Activated CD4-positive, alpha-beta T cell treated with anti-CD3 and anti-CD28 coated beads for 36 hours (primary cell): ENCODE measurements at regions of chr1 and their contacts with region 1.

Region 1: DNA sequence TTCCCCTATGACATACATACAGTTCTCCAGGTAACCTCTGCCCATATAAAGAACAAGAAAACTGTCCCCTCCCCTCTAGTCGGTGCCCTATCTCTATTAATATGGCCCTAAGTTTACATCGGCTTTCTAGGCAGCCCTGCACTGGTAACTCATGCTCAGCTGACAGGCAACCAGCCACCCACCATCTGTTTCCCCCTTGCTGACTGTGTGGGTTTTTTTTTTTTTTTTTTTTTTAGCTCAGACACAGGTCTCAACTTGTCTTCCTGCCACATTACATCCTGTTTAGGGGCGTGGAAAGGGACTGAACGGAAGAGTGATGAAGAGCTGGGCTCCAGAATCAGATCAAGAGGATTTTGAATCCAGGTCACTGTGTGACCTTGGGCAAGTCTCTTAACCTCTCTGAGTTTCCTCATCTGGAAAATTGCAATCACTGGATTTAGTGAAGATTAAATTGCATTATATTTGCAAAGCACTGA is 14.0 kb downstream of the LAPTM5 start:
- DNase-seq: peak; percentile 81
- ATAC-seq: peak; percentile 78
- H3K4me3 Mint-ChIP-seq: peak overlapping the region; percentile 59
- H3K27ac Mint-ChIP-seq: peak overlapping the region; percentile 99
- H3K4me1 Mint-ChIP-seq: peaks cover 91% of the 10 kb centered on the region
- H3K27me3 Mint-ChIP-seq: no peaks in the 10 kb centered on the region

Region 2: GRCh38 chr1:30684881-30685795 is 58.5 kb before region 1 on chr1:
- CTCF ChIA-PET with region 1: no interaction called
- POLR2A ChIA-PET with region 1: no interaction called
- intact Hi-C with region 1: no loop called
- DNase-seq: peak; percentile 35
- ATAC-seq: peak; percentile 47
- H3K4me3 Mint-ChIP-seq: peak overlapping the region; percentile 42
- H3K27ac Mint-ChIP-seq: no peak overlapping the region
- H3K4me1 Mint-ChIP-seq: peaks cover 3% of the 10 kb centered on the region
- H3K27me3 Mint-ChIP-seq: peaks cover 33% of the 10 kb centered on the region

Region 3: DNA sequence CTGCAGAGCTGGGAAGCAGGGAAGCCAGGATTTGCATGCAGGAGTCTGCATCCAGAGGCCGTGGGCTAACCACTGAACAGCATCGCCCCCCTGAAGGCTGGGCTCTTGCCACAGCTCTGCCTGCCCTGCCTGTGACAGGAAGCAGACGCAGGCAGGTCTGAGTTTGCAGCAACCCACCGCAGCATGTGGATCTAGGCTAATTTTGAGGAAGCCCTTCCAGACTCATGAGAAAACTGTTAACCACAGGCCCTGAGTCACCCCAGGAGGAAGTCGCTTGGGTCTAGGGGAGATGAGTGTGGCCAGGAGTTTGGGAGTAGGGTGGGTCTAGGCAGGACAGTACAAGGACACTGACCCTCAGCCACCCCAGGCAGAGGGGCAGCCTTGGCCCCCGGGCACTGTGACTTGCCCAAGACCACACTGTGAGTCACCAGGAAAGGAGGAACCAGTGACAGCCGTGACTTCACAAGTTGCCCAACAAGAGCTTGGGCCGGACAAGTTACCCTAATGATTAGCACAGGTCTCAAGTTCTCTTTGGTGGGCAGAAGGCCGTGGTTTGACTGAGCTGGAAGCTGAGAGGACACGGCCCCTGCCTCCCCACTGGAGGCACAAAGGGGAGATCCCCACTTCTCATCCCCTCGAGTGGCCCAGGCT is 13.0 kb after region 1 on chr1:
- CTCF ChIA-PET with region 1: interaction called, 27 read pairs
- POLR2A ChIA-PET with region 1: interaction called, 15 read pairs
- intact Hi-C with region 1: loop called (anchors 1 to 2 kb)
- DNase-seq: peak; percentile 84
- ATAC-seq: peak; percentile 54
- H3K4me3 Mint-ChIP-seq: peak overlapping the region; percentile 92
- H3K27ac Mint-ChIP-seq: peak overlapping the region; percentile 99
- H3K4me1 Mint-ChIP-seq: peaks cover 81% of the 10 kb centered on the region
- H3K27me3 Mint-ChIP-seq: no peaks in the 10 kb centered on the region

Region 4: GRCh38 chr1:30763651-30764248 is 20.1 kb after region 1 on chr1:
- CTCF ChIA-PET with region 1: interaction called, 20 read pairs
- POLR2A ChIA-PET with region 1: interaction called, 15 read pairs
- intact Hi-C with region 1: no loop called
- DNase-seq: no peak
- ATAC-seq: no peak
- H3K4me3 Mint-ChIP-seq: no peak overlapping the region
- H3K27ac Mint-ChIP-seq: peak overlapping the region; percentile 48
- H3K4me1 Mint-ChIP-seq: peaks cover 79% of the 10 kb centered on the region
- H3K27me3 Mint-ChIP-seq: no peaks in the 10 kb centered on the region

Region 5: GRCh38 chr1:30929135-30929889 is 185.7 kb after region 1 on chr1:
- CTCF ChIA-PET with region 1: interaction called, 3 read pairs
- POLR2A ChIA-PET with region 1: interaction called, 11 read pairs
- intact Hi-C with region 1: no loop called
- DNase-seq: peak; percentile 75
- ATAC-seq: peak; percentile 82
- H3K4me3 Mint-ChIP-seq: no peak overlapping the region
- H3K27ac Mint-ChIP-seq: no peak overlapping the region
- H3K4me1 Mint-ChIP-seq: no peaks in the 10 kb centered on the region
- H3K27me3 Mint-ChIP-seq: no peaks in the 10 kb centered on the region

Region 6: GRCh38 chr1:31054349-31054748 is 310.7 kb after region 1 on chr1:
- CTCF ChIA-PET with region 1: no interaction called
- POLR2A ChIA-PET with region 1: no interaction called
- intact Hi-C with region 1: loop called in 1 of 2 experiments (anchors 5 kb)
- DNase-seq: peak; percentile 21
- ATAC-seq: peak; percentile 79
- H3K4me3 Mint-ChIP-seq: no peak overlapping the region
- H3K27ac Mint-ChIP-seq: peak overlapping the region; percentile 74
- H3K4me1 Mint-ChIP-seq: peaks cover 63% of the 10 kb centered on the region
- H3K27me3 Mint-ChIP-seq: no peaks in the 10 kb centered on the region

Region 7: GRCh38 chr1:32273388-32274208 is 1530.0 kb after region 1 on chr1:
- CTCF ChIA-PET with region 1: no interaction called
- POLR2A ChIA-PET with region 1: no interaction called
- intact Hi-C with region 1: loop called in 1 of 2 experiments (anchors 5 kb)
- DNase-seq: peak; percentile 91
- ATAC-seq: peak; percentile 93
- H3K4me3 Mint-ChIP-seq: peak overlapping the region; percentile 62
- H3K27ac Mint-ChIP-seq: peak overlapping the region; percentile 94
- H3K4me1 Mint-ChIP-seq: peaks cover 58% of the 10 kb centered on the region
- H3K27me3 Mint-ChIP-seq: no peaks in the 10 kb centered on the region